ENCODE measurements at regions of chr1 and their contacts with region 1.

Region 1: GRCh38 chr1:64933296-64934070 is 32.9 kb downstream of the JAK1 start:
- DNase-seq: peak; percentile 31
- H3K4me3 ChIP-seq: no peak overlapping the region
- H3K27ac ChIP-seq: peak overlapping the region; percentile 82
- H3K4me1 ChIP-seq: peaks cover 25% of the 10 kb centered on the region
- H3K27me3 ChIP-seq: no peaks in the 10 kb centered on the region
- CTCF ChIP-seq: no peak
- POLR2A ChIP-seq: no peak

Region 2: DNA sequence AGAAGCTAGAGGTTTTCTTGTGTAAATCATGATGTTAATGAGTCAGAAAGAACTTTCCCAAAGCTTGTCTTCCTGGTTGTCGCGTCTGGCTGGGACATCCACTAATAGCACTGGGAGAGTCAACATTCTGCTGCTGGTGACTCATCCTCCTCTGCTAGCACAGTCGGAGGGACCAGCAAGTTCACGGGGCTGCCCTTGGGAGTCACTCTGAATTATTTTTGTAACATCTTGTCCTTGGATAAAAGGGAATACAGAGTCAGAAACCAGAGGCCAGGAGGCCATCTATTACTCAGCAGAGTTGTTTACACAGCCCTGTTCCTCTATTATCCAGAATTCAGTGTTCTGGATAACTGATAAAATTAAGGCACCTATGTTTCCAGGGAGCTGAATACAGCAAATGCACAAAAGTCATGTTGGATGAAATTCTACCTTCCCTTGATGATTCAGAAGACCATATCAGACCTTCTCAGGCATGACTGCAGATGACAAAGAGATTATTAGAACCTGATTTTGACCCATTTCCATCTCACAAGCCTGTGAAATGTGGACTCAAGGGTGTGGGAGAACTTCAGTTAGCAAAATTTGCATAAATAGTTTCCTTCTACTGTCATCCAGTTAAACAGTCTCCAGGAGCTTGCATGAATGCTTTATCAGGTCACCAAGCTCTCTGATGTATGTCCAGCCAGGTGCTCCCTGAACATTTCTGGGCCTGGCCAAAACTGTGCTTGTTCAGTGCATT is 35.2 kb before region 1 on chr1:
- CTCF ChIA-PET with region 1: interaction called, 4 read pairs
- POLR2A ChIA-PET with region 1: no interaction called
- dilution Hi-C with region 1: no loop called
- intact Hi-C with region 1: loop called (anchors 5 kb)
- DNase-seq: peak; percentile 98
- H3K4me3 ChIP-seq: peak overlapping the region in 1 of 3 experiments; percentile 32
- H3K27ac ChIP-seq: peak overlapping the region; percentile 97
- H3K4me1 ChIP-seq: peaks cover 42% of the 10 kb centered on the region
- H3K27me3 ChIP-seq: no peaks in the 10 kb centered on the region
- CTCF ChIP-seq: no peak
- POLR2A ChIP-seq: peak; percentile 55

Region 3: DNA sequence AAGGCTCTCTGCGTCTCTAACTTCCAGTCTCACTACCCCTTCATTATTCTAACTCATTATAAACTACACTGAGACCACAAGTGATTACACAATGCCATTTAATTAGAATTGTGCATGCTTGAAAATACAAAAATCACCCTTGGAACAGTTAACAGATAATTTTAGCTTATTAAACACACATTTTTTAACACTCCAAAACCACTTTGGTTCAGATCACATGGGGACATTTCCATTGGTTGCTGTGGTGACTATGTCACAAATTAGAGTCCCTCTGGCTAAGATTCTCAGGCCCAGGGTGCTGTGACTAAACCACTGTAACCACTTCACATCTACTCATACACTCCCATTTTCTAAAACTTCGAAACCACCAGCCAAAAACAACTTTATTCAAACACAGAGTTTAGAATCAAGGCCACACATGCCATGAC is 10.2 kb before region 1 on chr1:
- CTCF ChIA-PET with region 1: interaction called, 12 read pairs
- POLR2A ChIA-PET with region 1: no interaction called
- dilution Hi-C with region 1: no loop called
- intact Hi-C with region 1: loop called (anchors 1 kb)
- DNase-seq: no peak
- H3K4me3 ChIP-seq: no peak overlapping the region
- H3K27ac ChIP-seq: no peak overlapping the region
- H3K4me1 ChIP-seq: peaks cover 29% of the 10 kb centered on the region
- H3K27me3 ChIP-seq: no peaks in the 10 kb centered on the region
- CTCF ChIP-seq: no peak
- POLR2A ChIP-seq: no peak

Measured in endothelial cell of umbilical vein (primary cell).